PC-9 (cell line): ENCODE measurements at regions of chr2 and their contacts with region 1.

Region 1: GRCh38 chr2:155350783-155351580 is 652.5 kb downstream of the KCNJ3 start:
- DNase-seq: no peak
- H3K4me3 ChIP-seq: no peak overlapping the region
- H3K27ac ChIP-seq: no peak overlapping the region
- H3K4me1 ChIP-seq: no peaks in the 10 kb centered on the region
- H3K27me3 ChIP-seq: no peaks in the 10 kb centered on the region
- CTCF ChIP-seq: no peak

Region 2: GRCh38 chr2:155766342-155767115 is 415.5 kb after region 1 on chr2:
- CTCF ChIA-PET with region 1: no interaction called
- POLR2A ChIA-PET with region 1: no interaction called
- intact Hi-C with region 1: loop called (anchors 5 kb)
- DNase-seq: no peak
- H3K4me3 ChIP-seq: no peak overlapping the region
- H3K27ac ChIP-seq: no peak overlapping the region
- H3K4me1 ChIP-seq: no peaks in the 10 kb centered on the region
- H3K27me3 ChIP-seq: no peaks in the 10 kb centered on the region
- CTCF ChIP-seq: no peak